Activated CD4-positive, alpha-beta memory T cell treated with anti-CD3 and anti-CD28 coated beads for 36 hours (primary cell): ENCODE measurements at regions of chr17 and their contacts with region 1.

Region 1: GRCh38 chr17:56715613-56716357 is 117.9 kb downstream of the C17orf67 start:
- DNase-seq: peak; percentile 83
- H3K4me3 Mint-ChIP-seq: no peak overlapping the region
- H3K27ac Mint-ChIP-seq: no peak overlapping the region
- H3K4me1 Mint-ChIP-seq: peaks cover 3% of the 10 kb centered on the region
- H3K27me3 Mint-ChIP-seq: peaks cover 5% of the 10 kb centered on the region

Region 2: GRCh38 chr17:56499799-56500388 is 215.9 kb before region 1 on chr17:
- CTCF ChIA-PET with region 1: interaction called, 55 read pairs
- POLR2A ChIA-PET with region 1: no interaction called
- intact Hi-C with region 1: loop called (anchors 5 kb)
- DNase-seq: peak; percentile 11
- H3K4me3 Mint-ChIP-seq: no peak overlapping the region
- H3K27ac Mint-ChIP-seq: no peak overlapping the region
- H3K4me1 Mint-ChIP-seq: no peaks in the 10 kb centered on the region
- H3K27me3 Mint-ChIP-seq: no peaks in the 10 kb centered on the region

Region 3: DNA sequence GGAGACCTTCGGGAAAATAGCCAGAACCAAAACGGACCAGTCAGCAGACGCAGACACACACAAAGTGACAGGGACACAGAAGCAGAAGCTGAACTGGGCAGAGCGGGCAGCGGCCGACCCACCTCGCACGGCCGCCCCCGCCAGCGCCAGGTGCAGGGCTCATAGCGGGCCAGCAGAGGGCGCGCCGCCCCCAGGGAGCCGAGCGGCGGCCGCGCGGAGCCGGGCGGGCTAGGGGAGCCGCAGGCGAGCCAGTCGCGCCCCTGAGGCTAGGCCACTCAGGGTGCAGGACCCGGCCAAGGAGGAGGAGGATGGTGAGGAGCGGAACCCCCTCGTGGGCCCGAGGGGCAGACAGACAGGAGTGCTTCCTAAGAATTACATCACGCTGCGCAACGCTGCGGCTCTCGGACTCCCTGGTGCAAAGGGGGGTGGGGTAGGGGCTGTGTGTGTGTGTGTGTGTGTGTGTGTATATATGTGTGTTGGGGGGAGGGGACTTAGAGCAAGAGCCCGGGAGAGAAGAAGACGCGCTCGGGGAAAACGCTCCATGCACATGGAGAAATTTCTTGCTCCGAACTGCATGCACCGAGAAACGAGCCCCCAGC is 123.2 kb before region 1 on chr17:
- CTCF ChIA-PET with region 1: interaction called, 139 read pairs
- POLR2A ChIA-PET with region 1: interaction called, 4 read pairs
- intact Hi-C with region 1: loop called (anchors 1 kb)
- DNase-seq: peak; percentile 70
- H3K4me3 Mint-ChIP-seq: peak overlapping the region; percentile 60
- H3K27ac Mint-ChIP-seq: no peak overlapping the region
- H3K4me1 Mint-ChIP-seq: peaks cover 23% of the 10 kb centered on the region
- H3K27me3 Mint-ChIP-seq: peaks cover 44% of the 10 kb centered on the region

Region 4: DNA sequence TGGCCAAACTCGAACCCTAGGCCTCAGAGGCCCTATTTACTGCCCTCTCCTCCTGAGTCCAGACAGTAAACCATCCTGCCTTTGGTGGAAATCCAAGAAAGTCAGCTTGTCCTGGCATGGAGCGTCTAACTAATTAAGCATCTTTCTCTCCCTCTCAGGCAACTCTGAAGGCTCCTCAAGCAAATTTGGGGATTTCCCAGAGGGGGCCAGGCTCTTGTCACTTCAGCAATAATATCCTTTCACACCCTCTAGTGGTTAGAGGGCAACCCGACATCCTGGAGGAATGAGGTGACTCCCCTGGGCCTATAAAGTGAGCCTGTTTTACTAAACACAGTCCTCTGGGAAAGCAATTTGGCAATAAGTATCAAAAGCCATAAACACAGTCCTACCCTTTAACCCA is 61.9 kb before region 1 on chr17:
- CTCF ChIA-PET with region 1: interaction called, 22 read pairs
- POLR2A ChIA-PET with region 1: no interaction called
- intact Hi-C with region 1: loop called (anchors 1 kb)
- DNase-seq: peak; percentile 71
- H3K4me3 Mint-ChIP-seq: no peak overlapping the region
- H3K27ac Mint-ChIP-seq: no peak overlapping the region
- H3K4me1 Mint-ChIP-seq: peaks cover 3% of the 10 kb centered on the region
- H3K27me3 Mint-ChIP-seq: peaks cover 4% of the 10 kb centered on the region

Region 5: GRCh38 chr17:56690486-56691291 is 25.1 kb before region 1 on chr17:
- CTCF ChIA-PET with region 1: interaction called, 10 read pairs
- POLR2A ChIA-PET with region 1: no interaction called
- intact Hi-C with region 1: no loop called
- DNase-seq: no peak
- H3K4me3 Mint-ChIP-seq: no peak overlapping the region
- H3K27ac Mint-ChIP-seq: no peak overlapping the region
- H3K4me1 Mint-ChIP-seq: no peaks in the 10 kb centered on the region
- H3K27me3 Mint-ChIP-seq: peaks cover 1% of the 10 kb centered on the region

Region 6: DNA sequence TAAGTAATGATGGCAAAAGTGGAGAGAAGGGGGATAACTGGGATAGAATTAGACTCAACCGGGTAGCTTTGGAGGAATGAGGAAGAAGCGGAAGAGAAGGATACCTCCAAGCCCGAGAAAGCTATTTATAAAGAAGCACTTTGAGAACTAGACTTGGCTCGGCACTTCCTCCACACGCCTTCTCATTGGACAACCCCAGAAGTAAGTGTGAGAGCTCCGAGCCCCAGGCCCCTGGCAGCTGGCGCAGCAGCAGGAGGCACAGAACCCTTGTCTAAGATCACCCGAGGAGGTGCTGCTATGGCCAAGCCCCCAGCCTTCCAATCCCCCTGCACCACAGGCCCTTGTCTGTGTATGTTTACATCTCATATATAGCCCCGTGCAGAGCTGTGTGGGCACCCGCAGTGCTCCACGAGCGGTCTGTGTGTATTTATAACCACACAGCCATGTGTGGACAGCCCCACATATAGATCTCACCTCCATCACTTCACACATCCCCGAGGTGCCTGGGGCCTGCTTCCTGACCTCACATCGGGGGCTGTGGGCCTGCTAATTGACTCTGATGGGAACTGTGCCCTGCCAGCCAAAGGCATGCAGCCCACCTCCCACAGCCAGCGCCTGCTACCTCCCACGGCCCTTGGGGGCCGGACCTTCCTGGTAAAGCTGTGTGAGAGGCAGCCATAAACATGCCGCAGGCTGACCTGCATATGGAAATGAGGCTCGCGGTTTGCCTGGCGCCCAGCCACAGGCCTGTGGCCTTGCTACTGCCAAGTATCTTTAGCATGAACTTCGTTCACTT is 21.8 kb after region 1 on chr17:
- CTCF ChIA-PET with region 1: interaction called, 11 read pairs
- POLR2A ChIA-PET with region 1: no interaction called
- intact Hi-C with region 1: no loop called
- DNase-seq: no peak
- H3K4me3 Mint-ChIP-seq: no peak overlapping the region
- H3K27ac Mint-ChIP-seq: no peak overlapping the region
- H3K4me1 Mint-ChIP-seq: no peaks in the 10 kb centered on the region
- H3K27me3 Mint-ChIP-seq: peaks cover 6% of the 10 kb centered on the region

Region 7: GRCh38 chr17:56786989-56787482 is 71.3 kb after region 1 on chr17:
- CTCF ChIA-PET with region 1: interaction called, 56 read pairs
- POLR2A ChIA-PET with region 1: no interaction called
- intact Hi-C with region 1: no loop called
- DNase-seq: peak; percentile 83
- H3K4me3 Mint-ChIP-seq: peak overlapping the region; percentile 33
- H3K27ac Mint-ChIP-seq: peak overlapping the region; percentile 88
- H3K4me1 Mint-ChIP-seq: peaks cover 33% of the 10 kb centered on the region
- H3K27me3 Mint-ChIP-seq: no peaks in the 10 kb centered on the region

Region 8: GRCh38 chr17:56880133-56880532 is 164.3 kb after region 1 on chr17:
- CTCF ChIA-PET with region 1: no interaction called
- POLR2A ChIA-PET with region 1: no interaction called
- intact Hi-C with region 1: no loop called
- DNase-seq: no peak
- H3K4me3 Mint-ChIP-seq: no peak overlapping the region
- H3K27ac Mint-ChIP-seq: no peak overlapping the region
- H3K4me1 Mint-ChIP-seq: no peaks in the 10 kb centered on the region
- H3K27me3 Mint-ChIP-seq: no peaks in the 10 kb centered on the region